Activated naive CD4-positive, alpha-beta T cell treated with anti-CD3 and anti-CD28 coated beads, Interleukin-2, amount 10 ng/mL, durations not matched to agents 7 days and 5 days (primary cell): ENCODE measurements at regions of chr17 and their contacts with region 1.

Region 1: DNA sequence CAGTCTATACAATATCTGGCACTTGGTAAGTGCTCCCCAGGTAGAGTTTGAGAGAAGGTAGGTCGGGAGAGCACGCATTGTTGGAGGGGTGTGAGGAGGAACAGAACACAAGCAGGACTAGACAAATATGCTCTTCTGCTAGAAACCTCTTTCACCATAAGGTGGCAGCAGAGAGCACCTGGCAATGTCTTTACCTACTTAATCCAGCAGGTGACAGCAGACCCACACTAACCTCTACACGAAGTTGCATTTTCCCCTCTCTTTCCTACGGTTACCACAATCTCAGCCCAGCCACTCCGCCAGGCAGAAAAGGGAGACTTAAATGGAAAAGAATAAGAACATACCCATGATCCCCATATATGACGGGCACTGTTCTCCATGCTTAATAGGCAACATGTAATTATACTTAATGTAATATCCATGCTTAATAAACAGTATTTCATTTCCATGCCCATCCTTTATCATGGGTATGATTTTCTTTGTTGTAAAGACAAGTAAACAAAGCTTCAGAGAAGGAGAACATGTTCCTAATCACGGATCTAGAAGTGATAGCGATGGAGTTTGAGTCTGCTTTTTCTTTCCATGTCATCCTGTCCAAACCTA is 55.1 kb upstream of the CCL2 start:
- DNase-seq: peak; percentile 77
- H3K4me3 Mint-ChIP-seq: no peak overlapping the region
- H3K27ac Mint-ChIP-seq: no peak overlapping the region
- H3K4me1 Mint-ChIP-seq: no peaks in the 10 kb centered on the region
- H3K27me3 Mint-ChIP-seq: peaks cover 32% of the 10 kb centered on the region

Region 2: DNA sequence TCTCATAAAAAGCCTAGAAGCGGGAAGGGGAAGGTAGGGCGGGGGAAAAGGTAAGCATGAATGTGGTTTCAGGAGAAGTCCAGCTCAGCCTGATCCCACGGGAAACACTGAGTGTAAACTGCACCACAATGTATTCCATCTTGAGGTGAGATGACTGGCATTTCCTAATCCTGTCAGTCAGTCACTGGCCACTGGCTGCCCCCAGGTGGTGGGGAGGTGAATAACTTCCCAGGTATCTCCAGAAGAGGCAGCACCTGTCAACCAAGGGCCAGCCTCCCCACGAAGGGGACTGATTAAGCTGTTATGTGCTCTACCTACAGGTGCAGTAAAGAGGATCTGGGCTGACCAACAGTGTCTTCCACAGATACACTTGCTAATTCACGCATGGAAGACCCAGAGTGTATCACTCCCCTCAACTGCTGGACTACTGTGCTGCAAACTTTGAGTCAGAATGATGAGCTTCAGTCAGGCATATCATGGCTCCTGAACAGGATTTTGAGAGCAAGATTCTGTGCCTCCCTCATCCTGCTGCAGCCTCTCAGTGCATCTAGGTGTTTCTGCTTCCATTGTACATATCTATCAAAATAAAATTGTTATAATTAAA is 53.5 kb before region 1 on chr17:
- CTCF ChIA-PET with region 1: no interaction called
- DNase-seq: peak; percentile 79
- H3K4me3 Mint-ChIP-seq: no peak overlapping the region
- H3K27ac Mint-ChIP-seq: no peak overlapping the region
- H3K4me1 Mint-ChIP-seq: no peaks in the 10 kb centered on the region
- H3K27me3 Mint-ChIP-seq: peaks cover 4% of the 10 kb centered on the region

Region 3: DNA sequence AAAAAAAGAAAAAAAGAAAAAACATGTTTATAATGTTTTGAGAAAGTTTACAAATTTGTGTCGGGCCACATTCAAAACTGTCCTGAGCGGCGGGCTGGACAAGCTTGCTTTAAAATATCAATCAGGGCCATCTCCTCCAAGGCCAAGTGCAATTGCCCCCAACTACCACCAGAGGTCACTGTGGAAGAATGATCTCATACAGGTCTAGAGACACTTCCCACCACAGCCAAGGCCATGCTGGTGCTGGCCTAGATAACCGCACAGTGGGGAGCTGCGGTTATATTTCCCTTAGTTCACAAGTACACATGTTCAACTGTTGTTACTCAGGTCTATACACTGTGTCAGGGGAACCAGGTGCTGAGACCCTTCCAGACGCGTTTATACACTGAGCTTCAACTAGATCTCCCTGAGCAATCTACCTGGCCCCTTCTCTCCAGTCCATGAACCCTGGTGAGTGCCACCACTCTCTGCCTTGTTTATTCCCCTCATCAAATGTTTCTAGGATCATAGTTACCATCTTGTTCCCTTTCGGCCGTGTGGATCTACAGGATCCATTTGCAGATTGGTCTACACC is 28.7 kb before region 1 on chr17:
- CTCF ChIA-PET with region 1: interaction called, 17 read pairs
- DNase-seq: peak; percentile 69
- H3K4me3 Mint-ChIP-seq: no peak overlapping the region
- H3K27ac Mint-ChIP-seq: no peak overlapping the region
- H3K4me1 Mint-ChIP-seq: no peaks in the 10 kb centered on the region
- H3K27me3 Mint-ChIP-seq: peaks cover 4% of the 10 kb centered on the region

Region 4: DNA sequence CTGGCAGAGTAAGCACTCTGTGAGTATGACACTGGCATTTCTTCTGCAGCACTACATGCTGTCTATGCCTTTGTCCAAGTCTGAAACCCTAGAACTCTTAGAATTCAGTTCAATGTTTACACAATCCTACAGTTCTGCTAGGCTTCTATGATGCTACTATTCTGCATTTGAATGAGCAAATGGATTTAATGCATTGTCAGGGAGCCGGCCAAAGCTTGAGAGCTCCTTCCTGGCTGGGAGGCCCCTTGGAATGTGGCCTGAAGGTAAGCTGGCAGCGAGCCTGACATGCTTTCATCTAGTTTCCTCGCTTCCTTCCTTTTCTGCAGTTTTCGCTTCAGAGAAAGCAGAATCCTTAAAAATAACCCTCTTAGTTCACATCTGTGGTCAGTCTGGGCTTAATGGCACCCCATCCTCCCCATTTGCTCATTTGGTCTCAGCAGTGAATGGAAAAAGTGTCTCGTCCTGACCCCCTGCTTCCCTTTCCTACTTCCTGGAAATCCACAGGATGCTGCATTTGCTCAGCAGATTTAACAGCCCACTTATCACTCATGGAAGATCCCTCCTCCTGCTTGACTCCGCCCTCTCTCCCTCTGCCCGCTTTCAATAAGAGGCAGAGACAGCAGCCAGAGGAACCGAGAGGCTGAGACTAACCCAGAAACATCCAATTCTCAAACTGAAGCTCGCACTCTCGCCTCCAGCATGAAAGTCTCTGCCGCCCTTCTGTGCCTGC is 54.8 kb after region 1 on chr17 and contains the start of gene CCL2:
- CTCF ChIA-PET with region 1: no interaction called
- DNase-seq: no peak
- H3K4me3 Mint-ChIP-seq: no peak within 1 kb of the TSS
- H3K27ac Mint-ChIP-seq: no peak within 1 kb of the TSS
- H3K4me1 Mint-ChIP-seq: no peaks in the 10 kb centered on the region
- H3K27me3 Mint-ChIP-seq: peaks cover 48% of the 10 kb centered on the region

Region 5: GRCh38 chr17:34378664-34379101 is 178.7 kb after region 1 on chr17:
- CTCF ChIA-PET with region 1: interaction called, 11 read pairs
- DNase-seq: peak; percentile 64
- H3K4me3 Mint-ChIP-seq: no peak overlapping the region
- H3K27ac Mint-ChIP-seq: peak overlapping the region; percentile 47
- H3K4me1 Mint-ChIP-seq: peaks cover 55% of the 10 kb centered on the region
- H3K27me3 Mint-ChIP-seq: peaks cover 11% of the 10 kb centered on the region